ENCODE measurements at regions of chr9 and their contacts with region 1.

Region 1: DNA sequence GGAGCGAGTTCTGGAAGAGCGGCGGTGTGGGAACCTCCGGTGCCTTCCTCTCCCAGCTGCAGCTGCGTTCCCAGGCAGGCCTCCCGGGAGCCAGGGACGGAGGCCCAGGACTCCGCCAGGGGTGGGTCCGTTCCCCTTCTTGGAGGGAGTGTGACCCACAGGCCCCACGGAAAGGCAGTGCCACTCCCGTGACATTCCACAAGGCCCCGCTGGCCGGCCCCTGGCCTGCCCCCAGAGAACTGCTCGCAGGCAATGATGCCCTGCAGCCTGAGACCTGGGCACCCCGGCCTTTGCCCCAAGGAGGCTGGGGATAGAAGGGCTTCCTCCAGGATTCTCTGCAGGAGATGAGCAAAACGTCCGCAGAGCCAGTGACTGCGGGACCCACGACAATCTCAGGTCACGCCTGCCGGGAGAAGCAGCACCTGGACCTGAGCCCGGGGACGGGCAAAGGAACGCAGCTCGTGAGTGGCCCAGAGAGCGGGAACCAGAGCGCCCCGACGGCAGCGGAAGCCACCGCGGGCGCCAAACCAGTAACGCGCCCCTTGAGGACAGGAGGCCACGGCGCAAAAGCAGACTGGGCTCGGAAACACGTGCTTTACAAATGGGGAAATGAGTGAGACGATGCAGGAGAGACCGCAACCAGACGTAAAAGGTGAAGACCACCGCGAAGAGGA is 9.3 kb downstream of the OBP2B start:
- DNase-seq: no peak
- H3K4me3 ChIP-seq: no peak overlapping the region
- H3K27ac ChIP-seq: no peak overlapping the region
- H3K4me1 ChIP-seq: no peaks in the 10 kb centered on the region
- H3K27me3 ChIP-seq: no peaks in the 10 kb centered on the region
- CTCF ChIP-seq: no peak

Region 2: GRCh38 chr9:133115448-133116345 is 84.1 kb before region 1 on chr9:
- CTCF ChIA-PET with region 1: no interaction called
- dilution Hi-C with region 1: no loop called
- in situ Hi-C with region 1: no loop called
- intact Hi-C with region 1: no loop called
- DNase-seq: no peak
- H3K4me3 ChIP-seq: no peak overlapping the region
- H3K27ac ChIP-seq: no peak overlapping the region
- H3K4me1 ChIP-seq: peaks cover 52% of the 10 kb centered on the region
- H3K27me3 ChIP-seq: no peaks in the 10 kb centered on the region
- CTCF ChIP-seq: no peak

Region 3: DNA sequence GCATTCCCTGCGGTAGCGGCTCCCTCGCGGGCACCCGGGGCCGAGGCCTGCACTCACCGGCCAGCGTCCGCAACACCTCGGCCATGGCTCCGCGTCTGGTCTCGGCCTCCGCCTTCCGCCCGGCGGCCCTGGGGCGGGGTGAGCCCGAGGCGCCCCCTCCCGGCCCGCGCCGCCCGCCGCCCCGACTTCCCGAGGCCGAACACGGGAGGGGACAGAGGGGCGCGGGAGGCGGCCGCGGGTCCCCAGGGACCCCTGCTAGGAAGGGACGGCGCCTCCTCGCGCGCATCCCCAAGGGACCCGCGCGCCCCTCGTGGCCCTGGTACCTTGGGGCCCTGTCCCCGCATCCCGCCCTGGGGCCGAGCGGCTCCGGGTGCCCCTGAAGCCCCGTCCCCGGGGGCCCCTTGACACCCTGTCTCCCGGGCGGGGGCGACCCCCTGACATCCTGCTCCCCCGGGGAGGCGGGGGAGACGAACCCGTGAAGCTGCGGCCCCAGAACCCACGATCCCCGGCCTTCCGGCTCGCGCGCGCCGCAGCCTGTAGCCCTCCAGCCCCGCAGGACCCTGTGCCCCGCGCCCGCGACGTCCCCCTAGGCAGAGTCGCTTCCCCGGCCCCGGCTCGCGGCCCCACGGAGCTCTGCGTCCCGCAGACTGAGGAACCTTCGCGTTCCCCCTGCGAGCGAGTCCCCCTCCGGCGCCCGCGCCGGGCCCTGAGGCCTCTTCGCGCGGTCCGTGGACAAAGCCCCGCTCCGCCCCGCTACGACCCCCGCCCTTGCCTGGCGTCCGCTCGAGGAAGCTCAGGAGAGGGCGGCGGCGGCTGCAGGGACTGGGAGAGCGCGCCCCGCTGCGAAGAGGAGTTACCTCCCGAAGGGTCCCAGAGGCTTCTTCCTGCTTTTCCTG is 75.6 kb after region 1 on chr9 and contains the start of gene ABO:
- CTCF ChIA-PET with region 1: no interaction called
- dilution Hi-C with region 1: loop called (anchors 10 kb)
- in situ Hi-C with region 1: no loop called
- intact Hi-C with region 1: no loop called
- DNase-seq: no peak
- H3K4me3 ChIP-seq: peak within 1 kb of the TSS in 1 of 3 experiments; percentile 6
- H3K27ac ChIP-seq: no peak within 1 kb of the TSS
- H3K4me1 ChIP-seq: peaks cover 6% of the 10 kb centered on the region
- H3K27me3 ChIP-seq: peaks cover 26% of the 10 kb centered on the region
- CTCF ChIP-seq: no peak
- total RNA-seq, gene ABO: not detected